ENCODE measurements at regions of chr10 and their contacts with region 1.

Region 1: GRCh38 chr10:89426230-89426868 is 12.0 kb downstream of the IFIT5 start:
- DNase-seq: no peak
- ATAC-seq: peak; percentile 69

Region 2: GRCh38 chr10:89466599-89467035 is 40.3 kb after region 1 on chr10:
- intact Hi-C with region 1: loop called (anchors 5 kb)
- DNase-seq: no peak
- ATAC-seq: peak; percentile 42

Region 3: DNA sequence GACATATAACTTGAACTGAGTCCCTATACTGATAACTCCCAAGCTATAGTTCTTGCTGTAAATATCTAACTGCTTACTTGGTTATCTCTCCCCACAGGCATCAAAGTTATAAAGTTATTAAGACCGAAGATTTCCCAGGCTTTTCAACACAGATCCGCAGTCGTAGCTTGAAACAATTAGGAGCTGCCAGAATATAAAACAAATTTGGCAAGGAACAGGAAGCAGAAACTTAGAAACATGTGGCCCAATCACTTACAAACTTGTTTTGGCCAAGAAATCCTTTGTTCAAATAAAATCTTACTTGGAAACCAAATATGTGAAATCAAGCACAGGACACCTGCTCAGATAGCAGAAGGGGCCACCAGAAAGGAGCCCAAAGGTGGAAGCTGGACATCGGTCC is 100.0 kb after region 1 on chr10:
- intact Hi-C with region 1: no loop called
- DNase-seq: no peak
- ATAC-seq: peak; percentile 42

Region 4: GRCh38 chr10:89553064-89553734 is 126.8 kb after region 1 on chr10:
- intact Hi-C with region 1: loop called (anchors 2 kb)
- DNase-seq: no peak
- ATAC-seq: peak; percentile 71

Region 5: GRCh38 chr10:89563861-89564478 is 137.6 kb after region 1 on chr10:
- intact Hi-C with region 1: loop called (anchors 1 kb)
- DNase-seq: no peak
- ATAC-seq: no peak

Region 6: DNA sequence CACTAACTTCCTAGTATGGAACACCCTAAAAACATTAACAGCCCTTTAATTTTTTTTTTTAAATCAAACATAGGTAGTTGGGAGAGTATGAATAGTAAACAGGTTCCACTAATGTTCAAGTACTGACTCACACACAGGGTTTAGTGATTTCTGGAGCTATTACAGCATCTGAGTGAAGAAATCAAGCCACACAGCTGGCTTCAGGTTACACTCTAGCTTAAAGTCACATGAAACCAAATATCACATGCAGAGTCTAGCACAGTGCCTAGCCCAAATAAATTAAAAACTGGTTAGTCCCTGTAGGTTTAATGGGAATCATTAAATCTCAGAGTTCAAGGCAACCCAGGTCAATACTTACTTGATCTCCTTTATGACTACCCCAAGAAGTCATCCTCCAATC is 207.1 kb after region 1 on chr10:
- intact Hi-C with region 1: no loop called
- DNase-seq: no peak
- ATAC-seq: no peak

Region 7: GRCh38 chr10:89701238-89702120 is 275.1 kb after region 1 on chr10 and contains the start of gene KIF20B:
- intact Hi-C with region 1: loop called (anchors 2 kb)
- DNase-seq: peak; percentile 97
- ATAC-seq: peak; percentile 100
- total RNA-seq, gene KIF20B: 3.0 TPM